B cell (primary cell): ENCODE measurements at regions of chr5 and their contacts with region 1.

Region 1: GRCh38 chr5:65925601-65926275 is 637 bp upstream of the ERBIN start:
- DNase-seq: peak; percentile 94
- ATAC-seq: peak; percentile 74
- H3K4me3 ChIP-seq: peak overlapping the region; percentile 30 to 96 (median 93)
- H3K4me3 Mint-ChIP-seq: peak overlapping the region; percentile 94
- H3K27ac ChIP-seq: peak overlapping the region; percentile 94 to 98
- H3K27ac Mint-ChIP-seq: peak overlapping the region; percentile 99
- H3K4me1 ChIP-seq: peaks cover 16 to 28% of the 10 kb centered on the region in 2 donors
- H3K4me1 Mint-ChIP-seq: peaks cover 44% of the 10 kb centered on the region
- H3K27me3 ChIP-seq: no peaks in the 10 kb centered on the region
- H3K27me3 Mint-ChIP-seq: no peaks in the 10 kb centered on the region
- CTCF ChIP-seq: peak; percentile 29

Region 2: DNA sequence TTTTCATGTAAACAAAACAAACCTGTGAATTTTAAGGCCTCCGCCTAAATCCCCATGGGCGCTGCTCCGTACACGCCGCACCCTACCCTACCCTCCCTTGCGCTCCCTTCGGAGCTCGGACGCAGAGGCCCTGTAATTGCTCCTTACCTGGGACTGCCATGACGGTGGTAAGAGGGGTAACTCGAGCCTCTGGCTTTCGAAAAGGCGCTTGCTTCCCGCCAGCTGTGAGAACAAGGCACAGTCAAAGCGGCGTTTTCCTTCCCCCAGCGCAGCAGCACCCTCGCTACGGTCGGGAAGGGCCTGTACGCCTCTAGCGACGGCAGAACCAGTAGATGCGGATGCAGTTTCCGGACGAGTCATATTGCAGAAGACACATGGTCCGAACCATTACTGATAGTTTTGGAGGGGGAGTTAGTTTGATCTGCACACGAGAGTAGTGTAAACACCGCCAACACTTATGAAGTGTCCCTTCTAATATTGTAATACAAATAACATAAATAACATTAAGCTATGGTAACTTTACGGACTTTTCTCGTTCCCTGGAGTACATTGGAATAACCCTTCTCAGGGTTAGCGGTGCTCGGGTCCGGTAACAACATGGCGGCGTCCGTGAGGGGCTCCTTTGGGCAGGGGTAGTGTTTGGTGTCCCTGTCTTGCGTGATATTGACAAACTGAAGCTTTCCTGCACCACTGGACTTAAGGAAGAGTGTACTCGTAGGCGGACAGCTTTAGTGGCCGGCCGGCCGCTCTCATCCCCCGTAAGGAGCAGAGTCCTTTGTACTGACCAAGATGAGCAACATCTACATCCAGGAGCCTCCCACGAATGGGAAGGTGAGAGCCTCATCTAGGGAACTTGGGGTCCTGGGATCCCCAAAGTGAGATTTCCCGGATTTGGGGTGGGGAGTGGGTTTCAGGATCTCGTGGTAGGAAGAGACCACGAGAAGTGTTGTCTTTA is 1157.1 kb before region 1 on chr5 and contains the starts of genes CWC27 and SREK1IP1:
- CTCF ChIA-PET with region 1: no interaction called
- POLR2A ChIA-PET with region 1: no interaction called
- intact Hi-C with region 1: loop called (anchors 2 kb)
- DNase-seq: peak; percentile 92
- ATAC-seq: peak; percentile 94
- H3K4me3 ChIP-seq: peak within 1 kb of the TSS; percentile 81 to 99 (median 96)
- H3K4me3 Mint-ChIP-seq: peak within 1 kb of the TSS; percentile 99
- H3K27ac ChIP-seq: peak within 1 kb of the TSS; percentile 73 to 84
- H3K27ac Mint-ChIP-seq: peak within 1 kb of the TSS; percentile 96
- H3K4me1 ChIP-seq: peaks cover 30 to 37% of the 10 kb centered on the region in 2 donors
- H3K4me1 Mint-ChIP-seq: peaks cover 55% of the 10 kb centered on the region
- H3K27me3 ChIP-seq: no peaks in the 10 kb centered on the region
- H3K27me3 Mint-ChIP-seq: no peaks in the 10 kb centered on the region
- CTCF ChIP-seq: no peak
- total RNA-seq, gene CWC27: 27.5 and 30.5 TPM in 2 replicates
- total RNA-seq, gene SREK1IP1: 21.0 and 25.5 TPM in 2 replicates

Region 3: DNA sequence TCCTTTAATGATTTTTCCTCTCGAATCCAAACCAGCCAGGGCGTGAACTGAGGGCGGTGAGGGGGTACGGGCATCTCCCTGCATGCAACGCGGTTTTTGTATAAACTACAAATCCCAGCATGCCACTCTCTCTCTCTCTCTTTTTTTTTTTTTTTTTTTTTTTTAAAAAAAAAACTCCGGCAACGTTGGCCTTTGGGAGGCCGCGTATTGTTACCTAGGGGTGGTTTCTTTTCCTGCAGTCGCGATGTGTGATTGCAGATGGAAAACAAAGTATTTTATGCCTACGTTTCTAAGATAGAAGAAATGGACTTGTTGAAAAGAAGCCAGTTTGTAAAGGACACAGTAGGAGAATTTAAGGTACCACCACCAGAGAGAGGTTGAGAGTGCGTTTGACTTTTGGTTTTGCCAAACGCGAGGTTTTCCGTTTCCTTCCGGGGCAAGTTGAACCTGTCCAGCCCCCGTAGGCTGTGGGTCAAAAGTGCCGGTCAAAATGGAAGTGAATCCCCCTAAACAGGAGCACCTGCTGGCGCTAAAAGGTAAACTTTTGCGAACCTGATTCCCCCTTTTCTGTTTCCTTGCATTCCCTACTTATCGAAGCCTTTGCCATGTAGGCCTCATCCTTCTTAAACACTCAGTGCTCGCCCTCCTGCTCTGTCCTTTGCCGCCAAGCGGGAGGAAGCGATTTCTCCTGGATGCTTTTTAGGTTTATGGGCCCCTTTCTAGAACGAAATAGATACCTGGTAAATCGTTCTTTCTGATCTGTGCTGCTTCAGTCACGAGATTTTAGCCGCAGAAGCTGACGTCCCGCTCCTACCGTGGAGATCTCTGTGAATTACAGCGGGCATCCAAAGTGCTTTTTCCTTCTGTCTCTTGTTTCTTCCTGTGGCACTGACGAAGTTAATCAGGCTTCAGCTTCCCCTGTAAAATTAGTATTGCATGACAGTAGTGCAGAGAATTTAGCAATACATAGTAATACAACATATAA is 300.9 kb before region 1 on chr5 and contains the starts of genes SHLD3 and TRAPPC13:
- CTCF ChIA-PET with region 1: no interaction called
- POLR2A ChIA-PET with region 1: interaction called, 3 read pairs
- intact Hi-C with region 1: loop called (anchors 1 kb)
- DNase-seq: peak; percentile 96
- ATAC-seq: peak; percentile 76
- H3K4me3 ChIP-seq: peak within 1 kb of the TSS; percentile 88 to 99 (median 88)
- H3K4me3 Mint-ChIP-seq: peak within 1 kb of the TSS; percentile 99
- H3K27ac ChIP-seq: peak within 1 kb of the TSS; percentile 73 to 84
- H3K27ac Mint-ChIP-seq: peak within 1 kb of the TSS; percentile 98
- H3K4me1 ChIP-seq: peaks cover 16 to 21% of the 10 kb centered on the region in 2 donors
- H3K4me1 Mint-ChIP-seq: peaks cover 41% of the 10 kb centered on the region
- H3K27me3 ChIP-seq: no peaks in the 10 kb centered on the region
- H3K27me3 Mint-ChIP-seq: no peaks in the 10 kb centered on the region
- CTCF ChIP-seq: peak; percentile 18
- total RNA-seq, gene SHLD3: 6.3 and 6.7 TPM in 2 replicates
- total RNA-seq, gene TRAPPC13: 18.8 and 24.4 TPM in 2 replicates

Region 4: DNA sequence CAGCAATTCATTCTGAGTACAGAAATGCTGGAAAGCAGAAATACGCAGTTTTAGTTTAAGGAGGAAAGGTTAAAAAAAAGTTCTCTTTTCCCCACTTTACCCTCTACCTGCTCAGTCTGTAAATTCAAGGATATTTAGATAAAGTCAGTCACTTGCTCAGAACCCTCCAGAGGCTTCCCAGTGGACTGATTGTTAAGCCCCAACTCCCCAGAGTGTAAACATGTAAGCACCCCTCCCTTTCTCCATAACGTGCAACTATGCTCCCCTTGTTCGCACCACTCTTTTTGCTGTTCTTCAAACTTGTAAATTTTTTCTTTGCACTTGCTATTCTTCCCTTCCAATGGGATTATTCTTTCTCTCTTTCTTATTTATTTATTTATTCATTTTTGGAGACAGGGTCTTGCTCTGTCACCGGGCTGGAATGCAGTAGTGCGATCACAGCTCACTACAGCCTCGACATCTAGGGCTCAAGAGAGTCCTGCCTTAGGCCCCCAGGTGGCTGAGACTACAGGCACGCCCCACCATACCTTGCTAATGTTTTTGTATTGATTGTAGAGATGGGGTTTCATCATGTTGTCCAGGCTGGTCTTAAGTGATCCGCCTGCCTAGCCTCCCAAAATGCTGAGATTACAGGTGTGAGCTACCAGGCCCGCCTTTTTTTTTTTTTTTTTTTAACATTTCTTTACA is 31.8 kb before region 1 on chr5:
- CTCF ChIA-PET with region 1: no interaction called
- POLR2A ChIA-PET with region 1: no interaction called
- intact Hi-C with region 1: no loop called
- DNase-seq: no peak
- ATAC-seq: no peak
- H3K4me3 ChIP-seq: no peak overlapping the region
- H3K4me3 Mint-ChIP-seq: no peak overlapping the region
- H3K27ac ChIP-seq: no peak overlapping the region
- H3K27ac Mint-ChIP-seq: no peak overlapping the region
- H3K4me1 ChIP-seq: no peaks in the 10 kb centered on the region
- H3K4me1 Mint-ChIP-seq: no peaks in the 10 kb centered on the region
- H3K27me3 ChIP-seq: no peaks in the 10 kb centered on the region
- H3K27me3 Mint-ChIP-seq: peaks cover 2% of the 10 kb centered on the region
- CTCF ChIP-seq: no peak

Region 5: DNA sequence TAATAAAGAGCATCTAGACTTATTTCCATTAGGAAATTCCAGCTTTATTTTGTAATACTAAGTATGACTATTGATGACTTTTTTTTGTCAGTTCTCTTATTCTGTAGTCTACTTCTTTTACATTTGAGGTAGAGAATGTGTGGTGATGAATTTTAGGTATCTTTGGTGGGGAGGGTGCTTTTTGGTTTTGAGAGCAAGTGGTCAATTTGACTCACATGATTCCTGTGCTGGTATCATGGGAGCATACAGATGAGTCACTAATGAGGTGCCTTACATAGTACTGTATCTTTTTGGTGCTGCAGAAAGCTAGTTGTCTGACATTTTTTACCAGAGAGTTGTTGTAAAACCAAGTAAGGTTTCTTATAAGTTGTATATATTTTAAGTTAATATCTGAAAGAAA is 35.9 kb after region 1 on chr5:
- CTCF ChIA-PET with region 1: no interaction called
- POLR2A ChIA-PET with region 1: no interaction called
- intact Hi-C with region 1: loop called (anchors 5 kb)
- DNase-seq: no peak
- ATAC-seq: peak; percentile 57
- H3K4me3 ChIP-seq: no peak overlapping the region
- H3K4me3 Mint-ChIP-seq: peak overlapping the region; percentile 8
- H3K27ac ChIP-seq: peak overlapping the region in 1 of 2 donors; percentile 14
- H3K27ac Mint-ChIP-seq: no peak overlapping the region
- H3K4me1 ChIP-seq: peaks cover 0 to 15% of the 10 kb centered on the region in 2 donors
- H3K4me1 Mint-ChIP-seq: peaks cover 52% of the 10 kb centered on the region
- H3K27me3 ChIP-seq: no peaks in the 10 kb centered on the region
- H3K27me3 Mint-ChIP-seq: no peaks in the 10 kb centered on the region
- CTCF ChIP-seq: no peak

Region 6: DNA sequence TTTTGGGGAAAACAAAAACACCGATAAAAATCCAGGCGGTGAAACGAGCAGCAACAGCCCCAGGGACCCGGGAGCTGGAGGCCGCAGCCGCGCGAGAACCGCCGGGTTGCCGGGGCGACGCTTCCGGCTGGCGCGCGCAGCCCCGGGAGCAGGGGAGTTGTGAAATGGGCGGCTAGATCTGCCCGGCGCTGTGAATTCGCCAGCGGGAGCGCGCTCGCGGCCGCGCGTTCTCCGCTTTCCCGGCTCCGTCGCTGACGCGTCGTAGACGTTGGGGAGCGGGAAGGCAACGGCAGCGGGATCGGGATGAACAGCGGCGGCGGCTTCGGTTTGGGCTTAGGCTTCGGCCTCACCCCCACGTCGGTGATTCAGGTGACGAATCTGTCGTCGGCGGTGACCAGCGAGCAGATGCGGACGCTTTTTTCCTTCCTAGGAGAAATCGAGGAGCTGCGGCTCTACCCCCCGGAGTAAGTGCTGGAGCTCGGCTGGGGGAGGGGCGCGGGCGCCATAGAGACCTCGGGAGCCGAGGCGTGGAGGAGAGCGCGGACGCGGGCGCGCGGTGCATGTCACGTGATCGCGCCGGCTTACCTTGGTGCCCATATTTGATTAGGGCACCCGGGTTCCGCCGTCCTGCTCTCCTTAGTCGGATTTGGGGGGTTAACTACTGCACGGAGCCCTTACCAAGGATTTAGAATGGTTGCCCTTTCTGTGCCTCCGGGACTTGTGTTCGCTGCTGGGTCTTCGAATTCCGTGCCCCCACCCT is 218.5 kb after region 1 on chr5 and contains the start of gene SREK1:
- CTCF ChIA-PET with region 1: no interaction called
- POLR2A ChIA-PET with region 1: interaction called, 6 read pairs
- intact Hi-C with region 1: loop called (anchors 1 kb)
- DNase-seq: peak; percentile 93
- ATAC-seq: peak; percentile 84
- H3K4me3 ChIP-seq: peak within 1 kb of the TSS; percentile 76 to 99 (median 95)
- H3K4me3 Mint-ChIP-seq: peak within 1 kb of the TSS; percentile 96
- H3K27ac ChIP-seq: peak within 1 kb of the TSS; percentile 97 to 99
- H3K27ac Mint-ChIP-seq: peak within 1 kb of the TSS; percentile 100
- H3K4me1 ChIP-seq: peaks cover 9 to 16% of the 10 kb centered on the region in 2 donors
- H3K4me1 Mint-ChIP-seq: peaks cover 29% of the 10 kb centered on the region
- H3K27me3 ChIP-seq: no peaks in the 10 kb centered on the region
- H3K27me3 Mint-ChIP-seq: no peaks in the 10 kb centered on the region
- CTCF ChIP-seq: no peak
- total RNA-seq, gene SREK1: 116 and 117 TPM in 2 replicates

Region 7: DNA sequence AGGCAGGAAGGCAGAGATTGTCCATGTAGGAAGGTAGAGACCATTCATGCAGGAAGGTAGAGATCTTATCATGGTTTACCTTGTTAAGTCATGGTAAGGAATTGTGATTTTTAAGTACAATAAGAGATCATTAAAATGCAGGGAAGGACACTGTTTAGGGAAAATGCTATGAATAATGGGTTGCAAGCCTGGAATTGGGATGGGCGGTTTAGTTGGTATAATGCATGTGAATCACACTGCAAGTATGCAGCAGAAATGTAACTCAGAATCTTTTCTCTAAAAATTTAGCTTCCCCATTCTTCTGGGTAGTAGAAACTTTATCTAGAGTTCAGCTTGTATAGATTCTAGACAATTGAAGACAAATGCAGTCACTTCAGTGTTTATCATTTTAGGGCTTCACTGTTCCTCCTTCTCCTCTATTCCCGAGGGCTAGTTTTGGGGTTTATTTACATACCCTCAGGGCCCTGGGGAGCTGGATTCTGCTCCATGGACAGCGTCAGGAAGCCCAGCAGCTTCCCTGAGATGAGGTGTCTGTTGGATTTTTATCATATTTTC is 430.4 kb after region 1 on chr5:
- CTCF ChIA-PET with region 1: no interaction called
- POLR2A ChIA-PET with region 1: no interaction called
- intact Hi-C with region 1: no loop called
- DNase-seq: no peak
- ATAC-seq: no peak
- H3K4me3 ChIP-seq: no peak overlapping the region
- H3K4me3 Mint-ChIP-seq: no peak overlapping the region
- H3K27ac ChIP-seq: no peak overlapping the region
- H3K27ac Mint-ChIP-seq: no peak overlapping the region
- H3K4me1 ChIP-seq: no peaks in the 10 kb centered on the region
- H3K4me1 Mint-ChIP-seq: no peaks in the 10 kb centered on the region
- H3K27me3 ChIP-seq: peaks cover 0 to 4% (median 2%) of the 10 kb centered on the region in 4 experiments
- H3K27me3 Mint-ChIP-seq: peaks cover 14% of the 10 kb centered on the region
- CTCF ChIP-seq: no peak